ENCODE measurements at regions of chr11 and their contacts with region 1.

Region 1: GRCh38 chr11:128323381-128323780 is 264.0 kb downstream of the ETS1 start:
- DNase-seq: peak in 1 of 2 donors; percentile 81
- ATAC-seq: no peak
- H3K4me3 ChIP-seq: no peak overlapping the region
- H3K4me3 Mint-ChIP-seq: peak overlapping the region; percentile 77
- H3K27ac ChIP-seq: peak overlapping the region; percentile 83
- H3K27ac Mint-ChIP-seq: peak overlapping the region; percentile 93 to 95
- H3K4me1 ChIP-seq: peaks cover 72% of the 10 kb centered on the region
- H3K4me1 Mint-ChIP-seq: peaks cover 82 to 84% of the 10 kb centered on the region in 2 donors
- H3K27me3 ChIP-seq: no peaks in the 10 kb centered on the region
- H3K27me3 Mint-ChIP-seq: no peaks in the 10 kb centered on the region
- CTCF ChIP-seq: peak; percentile 24

Region 2: GRCh38 chr11:128039140-128040021 is 284.0 kb before region 1 on chr11:
- intact Hi-C with region 1: loop called (anchors 1 kb)
- DNase-seq: peak; percentile 63 to 91
- ATAC-seq: peak; percentile 84 to 93 (median 92)
- H3K4me3 ChIP-seq: peak overlapping the region; percentile 7
- H3K4me3 Mint-ChIP-seq: peak overlapping the region; percentile 84
- H3K27ac ChIP-seq: peak overlapping the region; percentile 78
- H3K27ac Mint-ChIP-seq: peak overlapping the region; percentile 82 to 89
- H3K4me1 ChIP-seq: peaks cover 63% of the 10 kb centered on the region
- H3K4me1 Mint-ChIP-seq: peaks cover 34 to 49% of the 10 kb centered on the region in 2 donors
- H3K27me3 ChIP-seq: no peaks in the 10 kb centered on the region
- H3K27me3 Mint-ChIP-seq: no peaks in the 10 kb centered on the region
- CTCF ChIP-seq: peak; percentile 44

Region 3: GRCh38 chr11:128290106-128290840 is 33.1 kb before region 1 on chr11:
- intact Hi-C with region 1: loop called (anchors 1 kb)
- DNase-seq: peak; percentile 62 to 95
- ATAC-seq: peak; percentile 79 to 90 (median 85)
- H3K4me3 ChIP-seq: peak overlapping the region; percentile 31
- H3K4me3 Mint-ChIP-seq: peak overlapping the region; percentile 94
- H3K27ac ChIP-seq: peak overlapping the region; percentile 97
- H3K27ac Mint-ChIP-seq: peak overlapping the region; percentile 98 to 99
- H3K4me1 ChIP-seq: peaks cover 37% of the 10 kb centered on the region
- H3K4me1 Mint-ChIP-seq: peaks cover 84 to 90% of the 10 kb centered on the region in 2 donors
- H3K27me3 ChIP-seq: no peaks in the 10 kb centered on the region
- H3K27me3 Mint-ChIP-seq: no peaks in the 10 kb centered on the region
- CTCF ChIP-seq: peak; percentile 87

Region 4: DNA sequence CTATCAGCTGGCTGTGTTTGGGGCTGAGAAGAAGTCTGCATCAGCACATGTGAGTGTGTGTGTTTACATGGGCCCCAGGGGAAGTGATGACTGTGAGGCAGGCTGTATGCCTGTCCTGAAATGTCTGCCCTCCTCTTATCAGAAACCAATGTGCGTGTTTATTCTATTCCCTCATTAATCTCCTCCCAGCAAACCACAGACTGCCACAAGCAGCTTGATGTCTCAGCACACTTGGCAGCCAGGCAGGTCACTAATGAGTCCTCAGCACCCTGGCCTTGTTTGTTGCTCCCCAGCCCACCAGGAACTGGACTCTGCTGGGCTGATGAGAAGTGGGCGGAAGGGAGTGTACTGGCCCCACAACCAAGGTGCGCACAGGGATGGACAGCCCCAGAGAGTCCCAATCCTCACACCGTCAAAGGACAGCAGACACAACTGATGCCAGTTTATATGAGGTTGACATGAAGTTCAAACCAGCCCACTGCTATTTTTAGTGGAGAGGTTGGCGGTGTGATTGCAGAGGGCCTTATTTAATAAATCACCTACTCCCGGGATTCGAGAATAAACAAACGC is 38.2 kb after region 1 on chr11:
- intact Hi-C with region 1: no loop called
- DNase-seq: peak in 1 of 2 donors; percentile 45
- ATAC-seq: peak in 2 of 3 donors; percentile 22 to 53
- H3K4me3 ChIP-seq: no peak overlapping the region
- H3K4me3 Mint-ChIP-seq: no peak overlapping the region
- H3K27ac ChIP-seq: peak overlapping the region; percentile 27
- H3K27ac Mint-ChIP-seq: no peak overlapping the region
- H3K4me1 ChIP-seq: peaks cover 6% of the 10 kb centered on the region
- H3K4me1 Mint-ChIP-seq: no peaks in the 10 kb centered on the region
- H3K27me3 ChIP-seq: no peaks in the 10 kb centered on the region
- H3K27me3 Mint-ChIP-seq: no peaks in the 10 kb centered on the region
- CTCF ChIP-seq: no peak

Region 5: GRCh38 chr11:128422576-128423370 is 99.4 kb after region 1 on chr11:
- intact Hi-C with region 1: loop called (anchors 1 kb)
- DNase-seq: peak; percentile 83 to 93
- ATAC-seq: peak; percentile 90 to 94 (median 92)
- H3K4me3 ChIP-seq: no peak overlapping the region
- H3K4me3 Mint-ChIP-seq: peak overlapping the region; percentile 82
- H3K27ac ChIP-seq: peak overlapping the region; percentile 74
- H3K27ac Mint-ChIP-seq: peak overlapping the region; percentile 93 to 97
- H3K4me1 ChIP-seq: peaks cover 30% of the 10 kb centered on the region
- H3K4me1 Mint-ChIP-seq: peaks cover 42 to 47% of the 10 kb centered on the region in 2 donors
- H3K27me3 ChIP-seq: no peaks in the 10 kb centered on the region
- H3K27me3 Mint-ChIP-seq: no peaks in the 10 kb centered on the region
- CTCF ChIP-seq: no peak

Region 6: GRCh38 chr11:128482512-128483191 is 159.3 kb after region 1 on chr11:
- intact Hi-C with region 1: loop called (anchors 1 kb)
- DNase-seq: peak in 1 of 2 donors; percentile 88
- ATAC-seq: peak; percentile 72 to 80 (median 78)
- H3K4me3 ChIP-seq: peak overlapping the region; percentile 14
- H3K4me3 Mint-ChIP-seq: peak overlapping the region; percentile 77
- H3K27ac ChIP-seq: peak overlapping the region; percentile 92
- H3K27ac Mint-ChIP-seq: peak overlapping the region; percentile 98 to 99
- H3K4me1 ChIP-seq: peaks cover 56% of the 10 kb centered on the region
- H3K4me1 Mint-ChIP-seq: peaks cover 92 to 95% of the 10 kb centered on the region in 2 donors
- H3K27me3 ChIP-seq: no peaks in the 10 kb centered on the region
- H3K27me3 Mint-ChIP-seq: no peaks in the 10 kb centered on the region
- CTCF ChIP-seq: no peak

Region 7: DNA sequence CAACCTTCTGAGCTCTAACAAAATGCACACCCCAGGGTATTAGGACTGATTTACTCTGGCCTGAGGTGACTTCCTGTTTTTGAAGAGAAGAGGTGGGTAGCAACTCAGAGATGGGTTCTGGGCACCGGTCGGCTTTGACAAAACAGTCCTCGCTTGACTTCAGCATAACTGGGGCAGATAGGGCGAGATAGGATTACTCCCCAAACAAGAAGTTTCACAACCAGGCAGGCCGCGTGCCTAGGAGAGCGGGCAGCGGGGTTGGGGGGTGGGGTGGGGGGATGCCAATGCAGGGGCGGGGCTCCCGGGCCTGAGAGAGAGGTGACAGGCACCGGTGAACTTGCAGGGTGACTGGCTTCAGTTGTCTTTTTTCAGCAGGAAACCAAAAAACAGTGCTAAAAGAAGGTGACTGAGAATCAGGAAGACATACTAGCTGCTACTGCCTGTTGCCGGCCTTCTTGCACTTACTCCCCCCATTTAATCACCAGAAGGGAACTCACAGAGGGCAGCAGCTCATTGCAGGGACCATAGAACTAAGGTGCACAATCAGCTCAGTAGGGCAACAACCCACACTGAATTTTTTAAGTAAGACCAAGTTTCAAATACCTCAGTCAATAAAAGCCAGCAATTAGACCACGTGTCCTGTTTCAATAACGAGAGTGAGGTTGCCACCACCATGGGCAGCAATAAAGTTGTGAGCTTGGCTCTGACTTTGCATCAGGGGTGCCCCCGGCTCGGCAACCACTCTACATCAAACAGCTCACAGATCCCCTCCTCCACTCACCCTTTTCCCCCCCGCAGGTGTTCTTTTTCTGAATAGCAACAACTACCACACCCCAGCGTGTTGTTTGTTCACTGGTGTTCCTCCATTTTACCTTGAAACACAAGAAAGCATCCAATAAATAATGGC is 301.1 kb after region 1 on chr11:
- intact Hi-C with region 1: loop called (anchors 1 kb)
- DNase-seq: peak; percentile 57 to 82
- ATAC-seq: peak; percentile 68 to 82 (median 73)
- H3K4me3 ChIP-seq: no peak overlapping the region
- H3K4me3 Mint-ChIP-seq: peak overlapping the region; percentile 78
- H3K27ac ChIP-seq: peak overlapping the region; percentile 83
- H3K27ac Mint-ChIP-seq: peak overlapping the region; percentile 93 to 97
- H3K4me1 ChIP-seq: peaks cover 69% of the 10 kb centered on the region
- H3K4me1 Mint-ChIP-seq: peaks cover 72 to 77% of the 10 kb centered on the region in 2 donors
- H3K27me3 ChIP-seq: no peaks in the 10 kb centered on the region
- H3K27me3 Mint-ChIP-seq: no peaks in the 10 kb centered on the region
- CTCF ChIP-seq: no peak

Region 8: DNA sequence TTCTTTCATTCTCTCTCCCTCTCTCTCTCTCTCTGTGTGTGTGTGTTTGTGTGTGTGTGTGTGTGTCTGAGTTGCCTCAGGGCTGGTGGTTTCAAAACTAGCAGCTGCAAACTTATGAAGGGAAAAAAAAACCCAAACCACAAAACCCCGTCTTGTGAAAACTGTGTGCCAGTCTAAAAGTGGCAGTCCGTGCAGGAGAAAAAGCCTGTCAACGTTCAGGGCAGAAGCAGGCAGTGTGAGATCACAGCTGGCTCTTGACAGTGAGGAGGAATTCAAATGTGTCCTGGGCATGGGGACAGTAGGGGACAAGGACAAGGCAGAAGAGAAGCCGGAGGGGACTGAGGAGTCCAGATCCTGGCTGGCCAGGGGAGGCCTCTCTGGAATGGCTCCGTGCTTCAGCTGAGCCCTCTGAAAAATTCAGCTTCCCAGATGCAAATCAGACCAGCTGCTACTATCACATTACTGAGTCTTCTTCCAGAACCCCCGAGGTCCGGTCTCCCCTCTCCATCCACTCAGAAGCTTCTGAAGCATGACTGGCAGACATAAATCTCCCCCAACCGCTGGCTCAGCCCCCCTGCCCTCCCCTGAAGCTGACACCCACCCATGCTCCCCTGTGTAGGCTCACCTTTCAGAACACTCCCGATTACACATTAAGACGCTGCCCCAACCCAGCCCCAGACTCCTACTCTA is 402.4 kb after region 1 on chr11:
- intact Hi-C with region 1: loop called (anchors 10 kb)
- DNase-seq: peak; percentile 54 to 92
- ATAC-seq: peak; percentile 65 to 75 (median 70)
- H3K4me3 ChIP-seq: peak overlapping the region; percentile 16
- H3K4me3 Mint-ChIP-seq: peak overlapping the region; percentile 74
- H3K27ac ChIP-seq: peak overlapping the region; percentile 72
- H3K27ac Mint-ChIP-seq: peak overlapping the region; percentile 86 to 94
- H3K4me1 ChIP-seq: peaks cover 99% of the 10 kb centered on the region
- H3K4me1 Mint-ChIP-seq: peaks cover 98 to 100% of the 10 kb centered on the region in 2 donors
- H3K27me3 ChIP-seq: no peaks in the 10 kb centered on the region
- H3K27me3 Mint-ChIP-seq: peaks cover 0 to 3% of the 10 kb centered on the region in 2 donors
- CTCF ChIP-seq: no peak

Measured in natural killer cell (primary cell).